Endothelial cell of umbilical vein (primary cell): ENCODE measurements at regions of chr12 and their contacts with region 1.

Region 1: DNA sequence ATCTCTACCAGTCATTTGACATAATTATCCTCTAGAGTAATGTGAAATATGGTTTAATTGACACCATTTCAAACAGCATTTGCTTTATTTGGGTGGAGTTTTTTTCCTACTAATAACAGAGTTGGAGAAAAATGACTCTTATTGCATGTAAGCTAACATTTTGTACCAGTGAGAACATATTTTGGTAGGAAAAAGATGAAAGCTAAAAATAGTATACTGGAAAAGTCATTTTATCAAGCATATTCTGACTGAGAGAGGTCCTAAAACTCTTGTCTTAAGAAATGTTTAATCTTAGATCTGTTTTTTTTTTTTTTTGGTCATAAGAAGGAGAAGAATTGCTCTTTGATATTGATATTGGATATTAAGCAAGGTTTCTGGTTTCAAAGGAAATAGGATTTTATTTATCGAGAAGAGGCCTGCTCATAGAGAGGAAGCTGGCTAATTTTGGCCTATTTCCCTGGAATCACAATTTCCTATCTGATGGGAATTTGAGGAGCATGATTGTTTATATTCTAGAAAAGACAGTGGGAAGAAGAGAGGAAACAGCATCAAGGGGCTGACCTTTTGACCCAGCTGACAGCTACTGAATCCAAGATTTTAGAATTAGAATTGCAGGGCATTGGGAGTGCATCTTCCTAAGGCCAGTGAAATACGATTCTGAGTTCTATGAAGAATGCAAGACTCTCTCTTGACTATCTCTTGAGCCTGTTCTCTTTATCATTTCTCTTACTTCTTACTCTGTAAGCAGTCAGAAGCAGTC is 19.4 kb downstream of the OTOGL start:
- DNase-seq: peak; percentile 12
- H3K4me3 ChIP-seq: no peak overlapping the region
- H3K27ac ChIP-seq: no peak overlapping the region
- H3K4me1 ChIP-seq: no peaks in the 10 kb centered on the region
- H3K27me3 ChIP-seq: no peaks in the 10 kb centered on the region
- CTCF ChIP-seq: no peak
- POLR2A ChIP-seq: no peak

Region 2: GRCh38 chr12:80162177-80162576 is 43.4 kb after region 1 on chr12:
- CTCF ChIA-PET with region 1: no interaction called
- POLR2A ChIA-PET with region 1: no interaction called
- dilution Hi-C with region 1: no loop called
- intact Hi-C with region 1: loop called (anchors 10 kb)
- DNase-seq: no peak
- H3K4me3 ChIP-seq: no peak overlapping the region
- H3K27ac ChIP-seq: no peak overlapping the region
- H3K4me1 ChIP-seq: no peaks in the 10 kb centered on the region
- H3K27me3 ChIP-seq: peaks cover 0 to 4% of the 10 kb centered on the region in 2 experiments
- CTCF ChIP-seq: no peak
- POLR2A ChIP-seq: no peak

Region 3: GRCh38 chr12:80178846-80179245 is 60.1 kb after region 1 on chr12:
- CTCF ChIA-PET with region 1: no interaction called
- POLR2A ChIA-PET with region 1: no interaction called
- dilution Hi-C with region 1: no loop called
- intact Hi-C with region 1: no loop called
- DNase-seq: no peak
- H3K4me3 ChIP-seq: no peak overlapping the region
- H3K27ac ChIP-seq: no peak overlapping the region
- H3K4me1 ChIP-seq: no peaks in the 10 kb centered on the region
- H3K27me3 ChIP-seq: no peaks in the 10 kb centered on the region
- CTCF ChIP-seq: no peak
- POLR2A ChIP-seq: no peak